Activated T-helper 1 cell treated with anti-CD3 and anti-CD28 coated beads, Interleukin-12 subunit alpha, Interleukin-12 subunit beta, Interleukin-2, Interleukin-4 antibody, amounts not matched to agents 30 ng/mL and 10 ng/mL and 1 ng/mL, durations not matched to agents 14 hours and 24 hours and 36 hours (primary cell): ENCODE measurements at regions of chr19 and their contacts with region 1.

Region 1: GRCh38 chr19:41706741-41707501 is 1.5 kb upstream of the CEACAM5 start:
- DNase-seq: peak; percentile 58
- H3K4me3 Mint-ChIP-seq: no peak overlapping the region
- H3K27ac Mint-ChIP-seq: no peak overlapping the region
- H3K4me1 Mint-ChIP-seq: peaks cover 6% of the 10 kb centered on the region
- H3K27me3 Mint-ChIP-seq: peaks cover 12% of the 10 kb centered on the region

Region 2: DNA sequence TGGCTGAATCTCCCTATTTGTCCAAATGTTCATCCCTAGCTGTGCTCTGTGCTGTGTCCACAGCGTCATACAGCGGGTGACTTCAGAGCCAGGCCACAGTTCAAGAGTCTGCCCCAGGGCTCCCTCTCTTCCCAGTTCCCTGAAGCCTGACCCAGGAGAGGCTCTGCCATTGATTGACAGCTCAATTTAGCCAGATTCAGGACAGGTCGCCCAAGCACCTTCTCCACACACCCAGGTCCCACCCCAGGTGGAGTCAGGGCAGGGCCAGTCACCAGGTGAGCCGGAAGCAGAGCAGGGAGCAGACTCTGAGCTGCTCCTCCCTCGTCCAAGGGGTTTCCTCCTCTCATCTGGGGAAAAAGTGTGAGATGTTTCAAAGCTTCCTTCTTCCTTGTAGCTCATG is 24.5 kb before region 1 on chr19:
- intact Hi-C with region 1: loop called (anchors 1 kb)
- DNase-seq: no peak
- H3K4me3 Mint-ChIP-seq: no peak overlapping the region
- H3K27ac Mint-ChIP-seq: no peak overlapping the region
- H3K4me1 Mint-ChIP-seq: no peaks in the 10 kb centered on the region
- H3K27me3 Mint-ChIP-seq: peaks cover 14% of the 10 kb centered on the region

Region 3: GRCh38 chr19:41785653-41786052 is 78.7 kb after region 1 on chr19:
- intact Hi-C with region 1: loop called (anchors 2 kb)
- DNase-seq: peak; percentile 65
- H3K4me3 Mint-ChIP-seq: no peak overlapping the region
- H3K27ac Mint-ChIP-seq: no peak overlapping the region
- H3K4me1 Mint-ChIP-seq: peaks cover 18% of the 10 kb centered on the region
- H3K27me3 Mint-ChIP-seq: peaks cover 63% of the 10 kb centered on the region

Region 4: GRCh38 chr19:41870401-41870873 is 163.5 kb after region 1 on chr19:
- intact Hi-C with region 1: no loop called
- DNase-seq: no peak
- H3K4me3 Mint-ChIP-seq: peak overlapping the region; percentile 66
- H3K27ac Mint-ChIP-seq: peak overlapping the region; percentile 89
- H3K4me1 Mint-ChIP-seq: peaks cover 73% of the 10 kb centered on the region
- H3K27me3 Mint-ChIP-seq: no peaks in the 10 kb centered on the region